GM12878 (cell line): ENCODE measurements at regions of chr7 and their contacts with region 1.

Region 1: GRCh38 chr7:21967598-21968003 is 21.9 kb upstream of the CDCA7L start:
- DNase-seq: no peak
- ATAC-seq: no peak; the same call in 1 of the 3 replicates
- H3K4me3 ChIP-seq: no peak overlapping the region
- H3K27ac ChIP-seq: peak overlapping the region; percentile 15; the same call in 1 of the 2 replicates
- H3K4me1 ChIP-seq: peaks cover 24% of the 10 kb centered on the region
- H3K27me3 ChIP-seq: no peaks in the 10 kb centered on the region
- CTCF ChIP-seq: no peak
- EP300 ChIP-seq: no peak
- POLR2A ChIP-seq: no peak
- RAD21 ChIP-seq: no peak

Region 2: GRCh38 chr7:21939136-21939857 is 28.3 kb before region 1 on chr7:
- CTCF ChIA-PET with region 1: interaction called, 6 read pairs
- POLR2A ChIA-PET with region 1: interaction called, 6 read pairs
- RAD21 ChIA-PET with region 1: interaction called, 32 read pairs
- SMC1A ChIA-PET with region 1: interaction called, 96 read pairs
- in situ Hi-C with region 1: no loop called
- intact Hi-C with region 1: loop called (anchors 2 kb)
- DNase-seq: peak; percentile 82
- ATAC-seq: peak; percentile 78
- H3K4me3 ChIP-seq: peak overlapping the region; percentile 31; the same call in 1 of the 2 replicates
- H3K27ac ChIP-seq: peak overlapping the region; percentile 78
- H3K4me1 ChIP-seq: peaks cover 37% of the 10 kb centered on the region
- H3K27me3 ChIP-seq: no peaks in the 10 kb centered on the region
- CTCF ChIP-seq: no peak
- EP300 ChIP-seq: peak; percentile 92; a peak in 3 of 4 replicates
- POLR2A ChIP-seq: no peak
- RAD21 ChIP-seq: no peak

Region 3: GRCh38 chr7:21945454-21946227 is 22.0 kb before region 1 on chr7 and contains the start of gene CDCA7L:
- CTCF ChIA-PET with region 1: interaction called, 6 read pairs
- POLR2A ChIA-PET with region 1: interaction called, 5 read pairs
- RAD21 ChIA-PET with region 1: interaction called, 32 read pairs
- SMC1A ChIA-PET with region 1: interaction called, 96 read pairs
- in situ Hi-C with region 1: no loop called
- intact Hi-C with region 1: loop called (anchors 2 kb)
- DNase-seq: peak; percentile 32
- ATAC-seq: peak; percentile 85
- H3K4me3 ChIP-seq: peak within 1 kb of the TSS; percentile 80
- H3K27ac ChIP-seq: peak within 1 kb of the TSS; percentile 85
- H3K4me1 ChIP-seq: peaks cover 44% of the 10 kb centered on the region
- H3K27me3 ChIP-seq: no peaks in the 10 kb centered on the region
- CTCF ChIP-seq: 0 out of 6 replicates have a peak, but pooled peaks of 1 of the 3 experiments have one; percentile 2
- EP300 ChIP-seq: no peak
- POLR2A ChIP-seq: peak; percentile 93
- RAD21 ChIP-seq: peak; percentile 20; the same call in 1 of the 2 replicates
- polyA plus RNA-seq, gene CDCA7L: 30.3 to 45.2 TPM

Region 4: GRCh38 chr7:22039670-22040069 is 72.1 kb after region 1 on chr7:
- CTCF ChIA-PET with region 1: no interaction called
- POLR2A ChIA-PET with region 1: no interaction called
- RAD21 ChIA-PET with region 1: no interaction called
- SMC1A ChIA-PET with region 1: no interaction called
- in situ Hi-C with region 1: no loop called
- intact Hi-C with region 1: no loop called
- DNase-seq: no peak
- ATAC-seq: no peak
- H3K4me3 ChIP-seq: no peak overlapping the region
- H3K27ac ChIP-seq: no peak overlapping the region
- H3K4me1 ChIP-seq: no peaks in the 10 kb centered on the region
- H3K27me3 ChIP-seq: no peaks in the 10 kb centered on the region
- CTCF ChIP-seq: no peak
- EP300 ChIP-seq: no peak
- POLR2A ChIP-seq: no peak
- RAD21 ChIP-seq: no peak

Region 5: DNA sequence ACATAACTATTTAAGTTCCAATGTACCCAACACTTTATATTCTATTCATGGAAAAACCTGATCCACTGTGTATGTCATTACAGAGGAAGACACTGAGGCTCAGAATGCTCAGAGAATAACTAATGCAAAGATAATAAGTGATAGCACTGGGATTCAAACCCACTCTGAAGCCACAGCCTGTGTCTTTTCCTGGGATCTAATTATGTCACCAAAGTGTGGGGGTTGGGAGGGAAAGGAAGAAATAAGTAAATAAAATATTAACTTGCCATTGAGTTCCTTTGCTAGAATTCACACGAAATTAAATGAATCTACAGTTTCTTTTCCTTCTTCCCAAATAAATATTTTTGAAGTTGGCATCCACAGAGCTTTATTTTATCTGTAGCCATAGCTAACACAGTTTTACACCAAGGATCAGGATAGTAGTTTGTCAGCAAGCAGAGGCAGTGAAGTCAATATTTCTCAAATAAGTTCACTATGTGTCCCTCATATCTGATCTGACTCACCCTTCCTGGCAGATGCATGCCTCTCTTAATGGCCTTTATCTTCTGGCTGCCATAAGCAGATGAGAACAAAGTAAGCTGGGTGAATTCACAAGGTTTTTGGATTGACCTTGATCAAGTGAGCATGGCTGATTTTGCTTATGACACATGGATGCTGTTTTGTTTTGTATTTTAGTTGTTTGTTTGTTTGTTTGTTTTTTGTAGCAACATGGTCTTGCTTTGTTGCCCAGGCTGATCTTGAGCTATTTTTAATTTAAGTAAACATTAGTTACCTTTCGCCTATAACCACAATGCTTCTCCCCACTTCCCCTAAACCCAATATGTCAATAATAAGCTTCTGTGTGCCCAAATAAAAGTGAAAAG is 383.1 kb after region 1 on chr7:
- CTCF ChIA-PET with region 1: no interaction called
- POLR2A ChIA-PET with region 1: no interaction called
- RAD21 ChIA-PET with region 1: no interaction called
- SMC1A ChIA-PET with region 1: no interaction called
- in situ Hi-C with region 1: no loop called
- intact Hi-C with region 1: no loop called
- DNase-seq: peak; percentile 46
- ATAC-seq: peak; percentile 72
- H3K4me3 ChIP-seq: peak overlapping the region; percentile 36; the same call in 1 of the 2 replicates
- H3K27ac ChIP-seq: peak overlapping the region; percentile 79
- H3K4me1 ChIP-seq: peaks cover 27% of the 10 kb centered on the region; the same call in 1 of the 2 replicates
- H3K27me3 ChIP-seq: no peaks in the 10 kb centered on the region; a peak in 1 of 4 replicates
- CTCF ChIP-seq: no peak
- EP300 ChIP-seq: no peak
- POLR2A ChIP-seq: no peak
- RAD21 ChIP-seq: no peak

Region 6: DNA sequence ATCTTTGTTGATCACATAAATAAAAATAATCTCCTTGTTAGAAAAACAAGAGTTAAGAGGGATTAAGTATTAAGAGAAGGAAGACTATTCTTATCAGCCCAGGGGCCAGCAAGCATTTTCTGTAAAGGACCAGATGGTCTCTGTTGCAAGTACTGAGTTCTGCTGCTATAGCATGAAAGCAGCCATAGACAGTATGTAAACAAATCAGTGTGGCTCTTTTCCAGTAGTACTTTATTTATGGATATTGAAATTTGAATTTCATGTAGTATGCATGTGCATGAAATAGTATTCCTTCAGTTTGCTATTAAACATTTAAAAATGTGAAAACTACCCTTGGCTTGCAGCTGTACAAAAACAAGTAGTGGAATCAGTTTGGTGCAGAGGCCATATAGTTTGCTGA is 1824.1 kb after region 1 on chr7:
- CTCF ChIA-PET with region 1: no interaction called
- POLR2A ChIA-PET with region 1: no interaction called
- RAD21 ChIA-PET with region 1: no interaction called
- SMC1A ChIA-PET with region 1: no interaction called
- in situ Hi-C with region 1: no loop called
- intact Hi-C with region 1: no loop called
- DNase-seq: no peak
- ATAC-seq: no peak
- H3K4me3 ChIP-seq: no peak overlapping the region
- H3K27ac ChIP-seq: no peak overlapping the region
- H3K4me1 ChIP-seq: no peaks in the 10 kb centered on the region
- H3K27me3 ChIP-seq: no peaks in the 10 kb centered on the region
- CTCF ChIP-seq: no peak
- EP300 ChIP-seq: no peak
- POLR2A ChIP-seq: no peak
- RAD21 ChIP-seq: no peak